Activated CD4-positive, alpha-beta memory T cell treated with anti-CD3 and anti-CD28 coated beads, Interleukin-2, amount 10 ng/mL, durations not matched to agents 7 days and 5 days (primary cell): ENCODE measurements at regions of chr6 and their contacts with region 1.

Region 1: DNA sequence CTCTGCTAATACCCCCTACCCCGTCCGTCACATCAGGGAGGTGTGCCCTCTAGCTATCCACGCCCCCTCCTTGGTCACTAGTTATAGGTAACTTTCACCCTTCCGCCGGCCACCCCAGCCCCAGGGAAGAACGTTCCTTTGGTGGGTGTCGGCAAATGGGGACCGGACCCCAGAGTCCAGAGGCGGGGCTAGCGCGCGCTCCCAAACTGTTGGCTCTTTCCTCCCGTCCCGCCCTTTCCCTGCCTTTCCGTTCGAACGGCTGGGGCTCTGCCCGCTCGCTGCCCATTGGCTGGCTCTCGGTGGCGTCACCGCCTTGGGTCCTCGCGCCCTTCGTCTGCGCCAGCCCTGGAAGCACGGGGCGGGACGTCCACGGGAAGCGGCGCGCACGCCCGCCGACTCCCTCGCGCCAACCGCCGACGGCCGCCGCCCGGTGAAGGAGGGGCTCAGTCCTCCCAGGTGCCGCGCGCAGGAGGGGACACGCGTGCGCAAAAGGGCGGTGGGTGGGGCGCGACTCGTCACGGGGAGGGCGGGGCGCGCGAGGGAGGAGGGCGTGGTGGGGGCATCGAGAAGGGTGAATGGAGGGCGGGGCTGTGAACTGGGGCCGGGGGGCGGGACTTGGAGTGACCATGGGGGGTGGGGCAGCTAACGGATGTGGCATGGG is 634 bp upstream of the PHF1 start:
- DNase-seq: peak; percentile 99
- H3K4me3 Mint-ChIP-seq: peak overlapping the region; percentile 80
- H3K27ac Mint-ChIP-seq: peak overlapping the region; percentile 97
- H3K4me1 Mint-ChIP-seq: peaks cover 59% of the 10 kb centered on the region
- H3K27me3 Mint-ChIP-seq: no peaks in the 10 kb centered on the region

Region 2: DNA sequence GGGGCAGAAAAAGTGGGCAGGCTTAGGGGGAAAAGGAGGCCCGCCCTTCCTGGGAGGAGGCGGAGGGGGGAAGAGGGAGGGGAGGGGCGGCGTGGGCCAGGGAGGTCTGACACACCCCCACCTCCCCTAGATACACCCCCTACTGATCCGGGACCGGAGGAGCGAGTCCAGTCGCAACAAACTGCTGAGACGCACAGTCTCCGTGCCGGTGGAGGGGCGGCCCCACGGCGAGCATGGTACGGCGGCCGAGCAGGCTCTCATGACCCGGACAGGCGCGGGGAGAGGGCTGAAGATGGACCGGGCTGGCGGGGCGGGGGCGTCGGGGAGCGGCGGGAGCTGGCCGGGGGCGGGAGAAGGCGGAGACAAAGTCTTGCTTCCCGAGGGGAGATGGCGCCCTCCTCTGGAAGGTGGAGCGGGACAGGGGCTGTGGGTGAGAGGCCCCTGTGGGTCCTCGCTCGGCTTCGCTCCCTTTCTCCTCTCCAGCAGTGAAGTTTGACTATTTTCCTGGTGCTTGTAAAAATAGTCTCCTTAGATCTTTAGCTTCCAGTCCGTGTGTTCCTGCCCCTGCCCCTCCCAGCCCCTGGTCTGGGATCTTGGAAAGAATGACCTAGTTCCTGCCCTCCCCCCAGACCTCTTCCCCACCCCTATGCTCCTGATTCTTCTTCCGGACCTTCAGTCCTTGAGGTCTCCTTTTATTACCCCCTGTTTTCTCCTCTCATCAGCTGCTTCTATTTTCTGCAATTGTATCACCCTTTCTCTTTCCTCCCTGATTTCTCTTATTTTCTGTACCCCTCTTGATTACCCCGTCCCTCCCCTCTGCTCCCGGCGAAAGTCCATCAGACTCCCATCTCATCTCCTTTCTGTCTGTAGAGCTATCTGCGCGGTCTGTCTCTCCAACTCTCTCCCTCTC is 15.7 kb after region 1 on chr6:
- CTCF ChIA-PET with region 1: interaction called, 4 read pairs
- POLR2A ChIA-PET with region 1: interaction called, 32 read pairs
- DNase-seq: peak; percentile 85
- H3K4me3 Mint-ChIP-seq: peak overlapping the region; percentile 98
- H3K27ac Mint-ChIP-seq: peak overlapping the region; percentile 93
- H3K4me1 Mint-ChIP-seq: peaks cover 75% of the 10 kb centered on the region
- H3K27me3 Mint-ChIP-seq: peaks cover 15% of the 10 kb centered on the region